Activated B cell treated with CpG ODN at 0.5 μM for 24 hours (primary cell): ENCODE measurements at regions of chr7 and their contacts with region 1.

Region 1: GRCh38 chr7:65307651-65308299 is 65.9 kb upstream of the ZNF92 start:
- DNase-seq: peak; percentile 22
- ATAC-seq: peak; percentile 79
- H3K4me3 Mint-ChIP-seq: no peak overlapping the region
- H3K27ac Mint-ChIP-seq: no peak overlapping the region
- H3K4me1 Mint-ChIP-seq: peaks cover 5% of the 10 kb centered on the region
- H3K27me3 Mint-ChIP-seq: peaks cover 2% of the 10 kb centered on the region
- CTCF ChIP-seq: no peak

Region 2: DNA sequence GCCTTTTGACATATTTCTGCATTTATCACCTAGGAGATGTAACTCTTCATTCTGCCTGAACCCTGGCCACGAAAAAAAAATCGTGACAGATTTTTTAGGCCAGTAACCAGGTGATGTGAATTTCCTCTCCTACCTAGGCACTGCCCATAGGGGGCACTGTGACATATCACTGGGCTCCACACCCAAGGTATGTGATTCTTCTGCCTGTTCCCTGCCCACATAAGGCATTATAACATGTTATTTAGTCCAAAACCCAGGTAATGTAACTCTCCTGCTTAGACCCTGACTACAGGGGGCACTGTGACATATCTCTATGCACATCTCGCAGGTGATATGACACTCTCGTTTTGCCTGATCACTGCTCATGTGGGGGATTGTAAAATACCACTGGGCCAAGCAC is 671.4 kb before region 1 on chr7:
- CTCF ChIA-PET with region 1: no interaction called
- POLR2A ChIA-PET with region 1: no interaction called
- intact Hi-C with region 1: loop called (anchors 2 kb)
- DNase-seq: no peak
- ATAC-seq: no peak
- H3K4me3 Mint-ChIP-seq: no peak overlapping the region
- H3K27ac Mint-ChIP-seq: no peak overlapping the region
- H3K4me1 Mint-ChIP-seq: no peaks in the 10 kb centered on the region
- H3K27me3 Mint-ChIP-seq: no peaks in the 10 kb centered on the region
- CTCF ChIP-seq: no peak

Region 3: DNA sequence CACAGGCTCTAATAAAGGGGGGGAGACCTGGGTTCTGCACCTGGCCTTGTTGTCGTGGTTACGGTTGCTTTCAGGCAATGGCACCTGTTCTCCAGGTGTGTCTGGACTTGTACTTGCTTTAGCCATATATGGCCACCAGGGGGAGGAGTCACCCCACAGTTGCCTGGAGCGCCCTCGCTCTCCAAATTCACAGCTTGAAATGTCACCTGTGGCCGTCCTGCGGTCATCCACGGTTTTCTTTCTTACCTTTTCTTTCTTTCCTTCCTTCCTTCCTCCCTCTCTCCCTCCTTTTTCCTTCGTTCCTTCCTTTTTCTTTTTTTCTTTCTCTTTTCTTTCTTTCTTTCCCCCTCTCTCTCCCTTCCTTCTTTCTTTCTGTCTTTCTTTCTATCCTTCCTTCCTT is 91.3 kb before region 1 on chr7:
- CTCF ChIA-PET with region 1: interaction called, 10 read pairs
- POLR2A ChIA-PET with region 1: no interaction called
- intact Hi-C with region 1: no loop called
- DNase-seq: no peak
- ATAC-seq: peak; percentile 65
- H3K4me3 Mint-ChIP-seq: no peak overlapping the region
- H3K27ac Mint-ChIP-seq: no peak overlapping the region
- H3K4me1 Mint-ChIP-seq: peaks cover 3% of the 10 kb centered on the region
- H3K27me3 Mint-ChIP-seq: peaks cover 2% of the 10 kb centered on the region
- CTCF ChIP-seq: no peak

Region 4: DNA sequence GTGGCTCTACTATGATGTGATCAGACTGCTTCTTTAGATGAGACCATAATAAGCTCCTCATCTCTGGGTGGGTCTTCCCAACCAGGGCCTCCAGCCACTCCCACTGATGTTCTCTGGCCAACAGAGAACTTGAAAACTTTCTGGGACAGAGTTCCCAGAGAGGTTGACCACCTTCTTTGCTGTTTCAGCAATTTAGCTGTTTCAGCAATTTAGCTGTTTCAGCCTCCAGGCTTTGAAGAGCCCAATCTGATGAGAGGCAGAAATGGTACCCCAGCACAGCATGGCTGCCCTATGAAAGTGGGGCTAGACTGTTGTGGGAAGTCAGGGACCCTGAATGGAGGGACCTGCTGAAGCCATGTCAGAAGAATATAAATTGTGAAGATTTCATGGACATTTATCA is 114.9 kb after region 1 on chr7:
- CTCF ChIA-PET with region 1: no interaction called
- POLR2A ChIA-PET with region 1: no interaction called
- intact Hi-C with region 1: no loop called
- DNase-seq: no peak
- ATAC-seq: no peak
- H3K4me3 Mint-ChIP-seq: no peak overlapping the region
- H3K27ac Mint-ChIP-seq: no peak overlapping the region
- H3K4me1 Mint-ChIP-seq: no peaks in the 10 kb centered on the region
- H3K27me3 Mint-ChIP-seq: no peaks in the 10 kb centered on the region
- CTCF ChIP-seq: no peak